Left ventricle myocardium inferior (tissue), 1 donor: ENCODE measurements at regions of chr17 and their contacts with region 1.

Region 1: GRCh38 chr17:71118039-71118438 is 948.7 kb downstream of the KCNJ2 start:
- DNase-seq: no peak
- H3K4me3 ChIP-seq: no peak overlapping the region
- H3K27ac ChIP-seq: no peak overlapping the region
- H3K4me1 ChIP-seq: no peaks in the 10 kb centered on the region
- H3K27me3 ChIP-seq: peaks cover 19% of the 10 kb centered on the region
- CTCF ChIP-seq: peak; percentile 61

Region 2: DNA sequence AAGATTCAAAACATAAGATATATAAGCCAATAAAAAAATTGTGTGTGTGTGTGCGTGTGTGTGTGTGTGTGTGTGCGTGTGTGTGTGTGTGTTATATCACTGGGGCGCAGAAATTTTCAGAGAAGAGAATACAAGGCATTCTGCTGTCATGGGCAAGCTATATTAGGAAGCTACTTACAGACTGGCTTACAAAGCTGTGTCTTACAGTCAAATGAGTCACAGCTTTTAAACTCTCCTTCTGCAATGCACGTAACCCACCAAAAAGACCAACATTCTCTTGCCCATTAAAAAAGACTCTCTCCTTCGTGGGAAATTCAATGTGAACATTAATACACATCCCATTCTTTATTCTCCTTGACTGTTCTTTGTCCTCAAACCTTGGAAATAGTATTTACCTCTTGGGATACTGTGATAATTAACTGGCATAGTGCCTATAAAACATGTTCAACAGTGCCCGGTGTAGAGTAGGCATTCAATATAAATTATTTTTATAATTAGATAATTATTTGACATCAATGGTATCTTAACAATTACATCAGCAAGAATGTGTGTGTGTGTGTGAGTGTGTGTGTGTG is 142.4 kb after region 1 on chr17:
- intact Hi-C with region 1: no loop called
- DNase-seq: no peak
- H3K4me3 ChIP-seq: no peak overlapping the region
- H3K27ac ChIP-seq: no peak overlapping the region
- H3K4me1 ChIP-seq: no peaks in the 10 kb centered on the region
- H3K27me3 ChIP-seq: no peaks in the 10 kb centered on the region
- CTCF ChIP-seq: no peak

Region 3: GRCh38 chr17:72539981-72540897 is 1422.2 kb after region 1 on chr17:
- intact Hi-C with region 1: loop called (anchors 10 kb)
- DNase-seq: peak; percentile 68
- H3K4me3 ChIP-seq: peak overlapping the region; percentile 45
- H3K27ac ChIP-seq: peak overlapping the region; percentile 48
- H3K4me1 ChIP-seq: peaks cover 12% of the 10 kb centered on the region
- H3K27me3 ChIP-seq: peaks cover 49% of the 10 kb centered on the region
- CTCF ChIP-seq: peak; percentile 88